ENCODE measurements at regions of chr5 and their contacts with region 1.

Region 1: GRCh38 chr5:149035372-149035790 is 27.5 kb downstream of the SH3TC2 start:
- DNase-seq: peak; percentile 89

Region 2: GRCh38 chr5:148179234-148179824 is 856.1 kb before region 1 on chr5:
- intact Hi-C with region 1: loop called (anchors 10 kb)
- DNase-seq: no peak

Measured in cardiac septum (tissue), 1 donor.